Dorsolateral prefrontal cortex (tissue), 120 donors: ENCODE measurements at regions of chr4 and their contacts with region 1.

Region 1: DNA sequence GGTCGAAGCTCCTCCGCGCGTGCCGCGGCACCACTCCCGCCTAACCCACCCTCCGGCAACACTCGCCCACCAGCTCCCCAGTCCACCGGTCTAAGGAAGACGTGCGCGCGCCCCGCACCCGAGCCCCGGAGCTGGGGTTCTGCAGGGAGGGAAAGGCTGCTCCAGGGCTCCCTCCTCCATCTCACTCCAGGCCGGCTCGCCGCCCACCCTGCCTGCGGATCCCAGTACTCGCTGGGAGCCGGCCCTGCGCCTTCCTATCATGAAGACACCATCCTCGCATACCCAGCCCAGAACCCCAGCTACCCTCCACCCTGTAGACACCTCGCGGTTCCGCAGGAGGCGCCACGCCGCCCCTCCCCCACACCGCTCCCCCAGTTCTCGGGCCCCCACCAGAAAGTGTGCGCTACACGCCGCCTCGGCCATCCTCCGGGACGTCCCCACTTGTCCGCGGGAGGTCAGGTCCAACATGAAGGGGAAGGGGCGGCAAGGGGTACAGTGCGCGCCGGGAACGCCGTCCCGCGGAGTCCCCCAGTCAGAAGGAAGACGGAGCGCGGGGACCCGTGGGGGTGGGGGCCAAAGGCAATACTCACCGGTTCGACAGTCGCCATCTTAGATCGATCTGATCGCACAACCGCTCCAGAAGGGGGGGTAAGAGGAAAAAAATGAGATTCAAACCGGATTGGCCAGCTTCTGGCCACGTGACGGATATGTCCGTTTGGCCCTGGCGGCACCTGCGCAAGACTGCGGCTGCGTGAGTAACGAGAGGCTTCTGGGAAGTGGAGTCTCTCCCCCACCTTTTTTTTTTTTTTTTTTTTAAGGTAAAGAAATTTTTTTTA is at the start of gene EIF4E:
- DNase-seq: peak; percentile 88 to 97 (median 94)
- H3K4me3 ChIP-seq: peak within 1 kb of the TSS; percentile 70 to 98 (median 90)
- H3K27ac ChIP-seq: peak within 1 kb of the TSS; percentile 76 to 99 (median 95)
- H3K27me3 ChIP-seq: no peaks in the 10 kb centered on the region
- CTCF ChIP-seq: peak in 23 of 56 donors; percentile 1 to 62 (median 13)
- total RNA-seq, gene EIF4E: 56.2 to 162 (median 97.3) TPM

Region 2: GRCh38 chr4:98143001-98143899 is 785.5 kb before region 1 on chr4 and contains the start of gene STPG2:
- intact Hi-C with region 1: loop called in 1 of 2 experiments (anchors 10 kb)
- DNase-seq: peak; percentile 77 to 96 (median 92)
- H3K4me3 ChIP-seq: peak within 1 kb of the TSS; percentile 57 to 95 (median 77)
- H3K27ac ChIP-seq: peak within 1 kb of the TSS; percentile 59 to 96 (median 90)
- H3K27me3 ChIP-seq: no peaks in the 10 kb centered on the region
- CTCF ChIP-seq: peak in 54 of 56 donors; percentile 12 to 66 (median 49)
- total RNA-seq, gene STPG2: 0.65 to 5.0 (median 2.1) TPM in 119 of 120 experiments, not detected in the other

Region 3: DNA sequence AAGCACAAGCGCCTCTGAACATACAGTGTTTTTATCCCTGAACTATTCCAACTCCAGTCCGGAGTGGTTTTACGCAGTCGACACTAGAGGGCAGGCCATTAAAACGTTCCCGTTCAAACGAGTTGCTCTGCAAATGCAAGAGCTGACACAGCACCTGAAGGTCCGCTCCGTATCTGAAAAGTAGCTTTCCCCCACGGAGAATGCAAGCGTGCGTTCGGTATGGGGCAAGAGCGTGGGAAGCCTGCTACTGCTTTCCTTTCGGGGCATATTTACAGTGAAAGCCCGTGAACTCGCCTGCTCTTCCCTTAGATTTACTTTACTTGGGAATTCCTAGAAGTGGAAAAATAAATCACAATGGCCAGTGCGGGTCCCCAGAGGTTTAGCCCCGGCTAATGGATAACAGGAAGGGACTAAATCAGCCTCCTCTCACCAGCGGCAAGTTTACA is 461.1 kb before region 1 on chr4:
- intact Hi-C with region 1: loop called in 1 of 2 experiments (anchors 5 kb)
- DNase-seq: peak; percentile 39 to 86 (median 80)
- H3K4me3 ChIP-seq: peak overlapping the region in 58 of 59 donors; percentile 2 to 70 (median 51)
- H3K27ac ChIP-seq: peak overlapping the region in 42 of 59 donors; percentile 6 to 85 (median 66)
- H3K27me3 ChIP-seq: no peaks in the 10 kb centered on the region
- CTCF ChIP-seq: peak; percentile 54 to 94 (median 84)

Region 4: GRCh38 chr4:98658287-98659105 is 270.2 kb before region 1 on chr4 and contains the start of gene TSPAN5:
- intact Hi-C with region 1: loop called (anchors 5 to 10 kb)
- DNase-seq: peak; percentile 56 to 90 (median 76)
- H3K4me3 ChIP-seq: peak within 1 kb of the TSS; percentile 59 to 96 (median 86)
- H3K27ac ChIP-seq: peak within 1 kb of the TSS; percentile 78 to 98 (median 94)
- H3K27me3 ChIP-seq: no peaks in the 10 kb centered on the region
- CTCF ChIP-seq: peak in 12 of 56 donors; percentile 3 to 35 (median 10)
- total RNA-seq, gene TSPAN5: 56.5 to 140 (median 109) TPM

Region 5: DNA sequence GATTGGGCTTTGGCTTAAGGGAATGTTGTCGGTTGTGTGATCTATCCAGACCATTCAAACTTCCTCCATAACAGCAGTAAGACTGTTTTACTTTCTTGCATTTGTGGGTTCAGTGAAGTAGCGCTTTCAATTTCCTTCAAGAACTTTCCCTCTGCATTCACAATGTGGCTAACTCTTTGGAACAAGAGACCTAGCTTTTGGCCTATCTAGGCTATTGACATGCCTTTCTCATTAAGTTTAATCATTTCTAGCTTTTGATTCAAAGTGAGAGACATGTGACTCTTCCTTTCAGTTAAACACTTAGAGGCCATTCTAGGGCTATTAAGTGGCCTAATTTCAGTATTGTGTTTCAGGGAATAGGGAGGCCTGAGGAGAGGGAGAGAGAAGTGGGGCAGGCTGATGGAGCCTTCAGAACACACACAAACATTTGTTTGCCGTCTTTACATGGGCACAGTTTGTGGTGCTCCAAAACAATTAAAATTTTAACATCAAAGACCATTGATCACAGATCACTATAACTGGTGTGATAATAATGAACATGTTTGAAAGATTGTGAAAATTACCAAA is 125.8 kb after region 1 on chr4:
- intact Hi-C with region 1: loop called in 1 of 2 experiments (anchors 10 kb)
- DNase-seq: no peak
- H3K4me3 ChIP-seq: no peak overlapping the region
- H3K27ac ChIP-seq: peak overlapping the region in 6 of 59 donors; percentile 4 to 42 (median 22)
- H3K27me3 ChIP-seq: no peaks in the 10 kb centered on the region
- CTCF ChIP-seq: no peak